Activated CD4-positive, alpha-beta T cell treated with anti-CD3 and anti-CD28 coated beads, Interleukin-2, amount 10 ng/mL, durations not matched to agents 24 days and 14 days (primary cell): ENCODE measurements at regions of chr21 and their contacts with region 1.

Region 1: GRCh38 chr21:33380483-33380998 is 22.7 kb upstream of the IFNGR2 start:
- DNase-seq: peak; percentile 92
- H3K4me3 Mint-ChIP-seq: peak overlapping the region; percentile 51
- H3K27ac Mint-ChIP-seq: peak overlapping the region; percentile 84
- H3K4me1 Mint-ChIP-seq: peaks cover 55% of the 10 kb centered on the region
- H3K27me3 Mint-ChIP-seq: peaks cover 27% of the 10 kb centered on the region

Region 2: DNA sequence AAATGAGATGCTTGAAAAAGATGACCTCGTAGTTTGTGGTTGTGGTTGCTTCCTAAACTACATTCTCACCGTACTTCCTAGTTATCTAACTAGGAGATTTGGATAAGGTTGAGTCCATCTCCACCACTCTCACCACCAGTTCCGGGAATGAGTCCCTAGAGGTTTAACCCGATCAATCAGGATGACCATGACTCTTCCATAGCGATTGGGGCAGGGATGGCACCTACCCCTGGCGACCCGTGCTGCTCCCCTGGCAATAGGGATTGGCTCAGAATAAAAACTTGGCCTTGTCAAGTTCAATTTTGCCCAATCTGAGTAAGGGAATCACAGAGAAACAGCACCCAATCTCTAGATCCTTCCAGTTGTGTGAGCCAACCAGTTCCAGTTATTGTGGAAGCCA is 1099.0 kb before region 1 on chr21:
- intact Hi-C with region 1: no loop called
- DNase-seq: no peak
- H3K4me3 Mint-ChIP-seq: no peak overlapping the region
- H3K27ac Mint-ChIP-seq: no peak overlapping the region
- H3K4me1 Mint-ChIP-seq: peaks cover 31% of the 10 kb centered on the region
- H3K27me3 Mint-ChIP-seq: peaks cover 3% of the 10 kb centered on the region

Region 3: GRCh38 chr21:32727687-32728455 is 652.7 kb before region 1 on chr21 and contains the start of gene SYNJ1:
- intact Hi-C with region 1: loop called (anchors 1 kb)
- DNase-seq: peak; percentile 98
- H3K4me3 Mint-ChIP-seq: peak within 1 kb of the TSS; percentile 90
- H3K27ac Mint-ChIP-seq: peak within 1 kb of the TSS; percentile 93
- H3K4me1 Mint-ChIP-seq: peaks cover 30% of the 10 kb centered on the region
- H3K27me3 Mint-ChIP-seq: no peaks in the 10 kb centered on the region
- total RNA-seq, gene SYNJ1: 11.3 and 12.6 TPM in 2 replicates

Region 4: GRCh38 chr21:33229784-33230544 is 150.6 kb before region 1 on chr21 and contains the start of gene IFNAR2:
- intact Hi-C with region 1: loop called (anchors 1 kb)
- DNase-seq: peak; percentile 93
- H3K4me3 Mint-ChIP-seq: peak within 1 kb of the TSS; percentile 84
- H3K27ac Mint-ChIP-seq: peak within 1 kb of the TSS; percentile 89
- H3K4me1 Mint-ChIP-seq: peaks cover 43% of the 10 kb centered on the region
- H3K27me3 Mint-ChIP-seq: peaks cover 2% of the 10 kb centered on the region
- total RNA-seq, gene IFNAR2: 35.2 and 36.7 TPM in 2 replicates

Region 5: GRCh38 chr21:33324291-33325221 is 56.0 kb before region 1 on chr21 and contains the start of gene IFNAR1:
- intact Hi-C with region 1: loop called (anchors 1 kb)
- DNase-seq: peak; percentile 99
- H3K4me3 Mint-ChIP-seq: no peak within 1 kb of the TSS
- H3K27ac Mint-ChIP-seq: no peak within 1 kb of the TSS
- H3K4me1 Mint-ChIP-seq: peaks cover 19% of the 10 kb centered on the region
- H3K27me3 Mint-ChIP-seq: peaks cover 4% of the 10 kb centered on the region
- total RNA-seq, gene IFNAR1: 19.0 and 24.0 TPM in 2 replicates

Region 6: DNA sequence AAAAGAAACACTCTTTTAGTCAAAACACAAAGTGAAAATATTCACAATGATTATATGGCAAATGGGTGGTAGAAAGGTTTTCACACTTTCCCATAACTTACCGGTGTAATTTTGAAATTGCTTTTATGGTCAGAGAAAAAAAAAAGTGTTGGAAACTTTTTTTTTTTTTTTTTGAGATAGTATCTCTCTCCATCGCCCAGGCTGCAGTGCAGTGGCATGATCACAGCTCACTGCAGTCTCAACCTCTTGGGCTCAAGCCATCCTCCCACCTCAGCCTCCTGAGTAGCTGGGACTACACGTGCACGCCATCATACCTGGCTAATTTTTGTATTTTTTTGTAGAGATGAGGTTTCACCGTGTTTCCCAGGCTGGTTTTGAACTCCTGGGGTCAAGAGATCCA is 26.0 kb after region 1 on chr21:
- intact Hi-C with region 1: loop called (anchors 1 kb)
- DNase-seq: no peak
- H3K4me3 Mint-ChIP-seq: peak overlapping the region; percentile 23
- H3K27ac Mint-ChIP-seq: no peak overlapping the region
- H3K4me1 Mint-ChIP-seq: peaks cover 31% of the 10 kb centered on the region
- H3K27me3 Mint-ChIP-seq: peaks cover 34% of the 10 kb centered on the region

Region 7: DNA sequence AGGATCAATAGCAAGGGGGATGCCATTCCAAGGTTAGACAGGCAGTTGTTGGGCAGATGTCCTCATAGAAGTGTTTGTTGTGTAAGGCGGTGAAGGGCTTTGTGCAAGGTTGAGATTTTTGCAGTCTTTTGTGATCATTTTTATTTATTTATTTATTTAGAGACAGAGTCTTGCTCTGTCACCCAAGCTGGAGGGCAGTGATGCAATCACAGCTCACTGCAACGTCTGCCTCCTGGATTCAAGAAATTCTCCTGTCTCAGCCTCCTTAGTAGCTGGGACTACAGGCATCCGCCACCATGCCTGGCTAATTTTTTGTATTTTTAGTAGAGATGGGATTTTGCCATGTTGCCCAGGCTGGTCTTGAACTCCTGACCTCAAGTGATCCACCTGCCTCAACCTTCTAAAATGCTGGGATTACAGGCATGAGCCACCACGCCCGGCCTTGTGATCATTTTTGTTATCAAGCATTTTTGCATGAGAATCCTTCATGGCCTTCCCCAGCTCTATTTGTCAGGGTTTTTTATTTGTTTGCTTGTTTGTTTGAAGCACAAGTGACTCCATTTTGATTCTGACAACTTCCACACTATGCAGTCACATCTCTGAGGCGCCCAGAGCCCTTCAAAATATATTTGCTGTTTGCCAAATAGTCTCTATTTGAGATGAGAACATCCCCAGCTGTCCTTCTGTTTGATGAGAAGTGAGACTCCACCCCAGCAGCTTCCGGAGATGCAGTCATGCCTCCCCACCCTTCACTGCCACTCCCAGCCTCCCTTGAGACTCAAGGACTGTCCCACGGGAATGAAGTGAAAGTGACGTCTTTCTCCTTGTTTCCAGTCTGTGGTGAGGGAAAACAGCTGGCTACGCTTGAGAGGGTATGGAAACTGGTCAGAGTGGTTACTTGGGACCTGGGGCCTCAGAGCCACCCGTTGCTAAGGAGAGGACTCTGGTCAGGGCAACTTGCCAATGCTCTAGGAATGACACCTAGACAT is 61.2 kb after region 1 on chr21:
- intact Hi-C with region 1: loop called (anchors 1 kb)
- DNase-seq: no peak
- H3K4me3 Mint-ChIP-seq: no peak overlapping the region
- H3K27ac Mint-ChIP-seq: no peak overlapping the region
- H3K4me1 Mint-ChIP-seq: peaks cover 7% of the 10 kb centered on the region
- H3K27me3 Mint-ChIP-seq: no peaks in the 10 kb centered on the region

Region 8: DNA sequence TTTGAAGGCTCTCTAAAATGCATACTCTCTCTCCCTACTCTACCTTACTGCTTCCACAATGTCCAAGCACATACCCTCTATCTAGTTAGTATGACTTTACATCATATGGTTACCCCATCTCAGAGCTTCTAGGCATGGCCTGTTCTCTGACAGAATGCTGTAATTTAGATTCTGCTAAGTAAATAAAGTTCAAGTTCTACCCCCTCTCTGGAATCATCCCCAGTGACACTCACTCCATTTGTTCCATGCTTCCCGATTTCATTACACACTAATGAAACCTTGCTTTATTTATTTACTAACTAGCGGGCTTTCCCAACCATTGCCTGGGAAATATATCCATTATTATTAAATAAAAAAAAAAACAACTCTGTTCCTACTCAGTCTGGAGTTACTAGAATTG is 253.7 kb after region 1 on chr21:
- intact Hi-C with region 1: no loop called
- DNase-seq: no peak
- H3K4me3 Mint-ChIP-seq: no peak overlapping the region
- H3K27ac Mint-ChIP-seq: no peak overlapping the region
- H3K4me1 Mint-ChIP-seq: peaks cover 9% of the 10 kb centered on the region
- H3K27me3 Mint-ChIP-seq: no peaks in the 10 kb centered on the region